Activated CD4-positive, alpha-beta memory T cell treated with anti-CD3 and anti-CD28 coated beads, Interleukin-2, amount 10 ng/mL, durations not matched to agents 7 days and 5 days (primary cell): ENCODE measurements at regions of chr15 and their contacts with region 1.

Region 1: GRCh38 chr15:75069301-75069925 is 46.0 kb downstream of the PPCDC start:
- DNase-seq: no peak
- H3K4me3 Mint-ChIP-seq: no peak overlapping the region
- H3K27ac Mint-ChIP-seq: peak overlapping the region; percentile 95
- H3K4me1 Mint-ChIP-seq: peaks cover 78% of the 10 kb centered on the region
- H3K27me3 Mint-ChIP-seq: no peaks in the 10 kb centered on the region

Region 2: DNA sequence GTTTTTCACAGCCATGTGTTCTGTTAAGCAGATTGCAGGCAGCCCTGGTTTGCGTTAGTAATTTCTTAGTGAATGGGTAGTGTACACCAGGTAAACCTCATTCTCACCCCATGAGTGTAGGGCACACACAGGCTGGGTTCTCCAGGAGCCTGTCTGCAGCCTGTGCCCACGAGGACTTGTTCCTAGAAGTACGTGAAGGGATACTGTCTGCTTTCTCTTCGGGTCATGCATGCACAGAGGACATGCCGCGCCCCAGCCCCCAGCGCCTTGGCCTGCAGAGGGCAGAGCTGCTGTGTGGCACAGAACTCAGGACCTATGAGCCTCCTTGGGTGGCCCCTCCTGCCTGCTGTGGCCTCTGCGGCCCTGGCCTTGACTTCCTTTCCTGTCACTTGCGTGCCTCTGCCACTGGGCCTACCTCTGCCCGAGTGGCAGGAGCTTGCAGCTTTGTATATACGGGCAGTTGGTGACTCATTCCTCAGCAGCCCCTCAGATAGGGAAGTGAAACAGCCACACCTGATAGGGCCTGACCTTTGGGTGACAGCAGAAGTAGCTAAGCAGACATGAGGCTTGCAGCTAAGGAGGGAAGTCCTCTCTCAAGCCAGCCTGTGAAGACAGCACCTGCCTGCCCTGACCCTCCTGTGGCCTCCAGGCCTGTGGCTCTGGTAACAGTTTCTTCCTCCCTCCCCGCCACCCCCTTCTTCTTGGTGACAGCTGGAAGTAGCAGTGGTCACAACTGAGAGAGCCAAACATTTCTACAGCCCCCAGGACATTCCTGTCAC is 26.5 kb before region 1 on chr15:
- CTCF ChIA-PET with region 1: interaction called, 34 read pairs
- POLR2A ChIA-PET with region 1: interaction called, 4 read pairs
- DNase-seq: peak; percentile 92
- H3K4me3 Mint-ChIP-seq: peak overlapping the region; percentile 74
- H3K27ac Mint-ChIP-seq: peak overlapping the region; percentile 86
- H3K4me1 Mint-ChIP-seq: peaks cover 91% of the 10 kb centered on the region
- H3K27me3 Mint-ChIP-seq: no peaks in the 10 kb centered on the region

Region 3: DNA sequence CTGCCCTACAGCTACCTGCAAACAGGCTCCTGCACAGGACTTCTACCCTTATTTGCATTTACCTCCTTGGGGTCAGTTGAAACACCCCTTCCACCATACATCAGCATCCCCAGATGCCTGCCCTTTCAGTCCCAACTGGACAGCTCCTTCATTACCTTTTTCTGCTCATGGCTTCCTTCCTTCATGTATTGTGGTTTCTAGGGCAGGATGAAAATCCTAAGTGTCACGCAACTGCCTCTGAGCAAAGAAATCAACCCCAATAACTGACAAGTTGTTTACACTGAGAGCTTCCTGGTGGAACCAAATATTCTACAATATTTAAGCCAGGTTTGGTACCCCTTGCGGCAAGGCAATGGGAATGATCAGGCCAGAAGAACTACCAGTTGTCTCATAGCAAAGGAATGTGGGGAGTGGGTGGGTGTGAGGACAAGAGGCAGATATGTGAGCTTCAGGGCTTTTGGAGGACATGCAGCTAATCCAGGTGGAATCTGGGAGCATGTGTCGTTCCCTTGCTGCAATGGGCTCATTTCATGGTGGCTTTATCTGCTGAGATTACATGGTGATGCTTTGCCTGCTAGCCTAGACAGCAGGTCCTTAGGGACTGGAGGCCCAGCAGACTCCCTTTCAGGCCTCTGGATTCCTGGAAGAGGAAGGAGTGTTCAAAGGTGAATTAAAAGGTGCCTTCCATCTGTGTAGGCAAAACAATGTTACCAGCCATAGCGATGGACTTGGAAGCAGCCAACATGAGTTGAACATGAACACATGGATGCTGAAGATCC is 11.1 kb before region 1 on chr15:
- CTCF ChIA-PET with region 1: interaction called, 4 read pairs
- POLR2A ChIA-PET with region 1: interaction called, 11 read pairs
- DNase-seq: peak; percentile 12
- H3K4me3 Mint-ChIP-seq: no peak overlapping the region
- H3K27ac Mint-ChIP-seq: peak overlapping the region; percentile 34
- H3K4me1 Mint-ChIP-seq: peaks cover 53% of the 10 kb centered on the region
- H3K27me3 Mint-ChIP-seq: no peaks in the 10 kb centered on the region

Region 4: DNA sequence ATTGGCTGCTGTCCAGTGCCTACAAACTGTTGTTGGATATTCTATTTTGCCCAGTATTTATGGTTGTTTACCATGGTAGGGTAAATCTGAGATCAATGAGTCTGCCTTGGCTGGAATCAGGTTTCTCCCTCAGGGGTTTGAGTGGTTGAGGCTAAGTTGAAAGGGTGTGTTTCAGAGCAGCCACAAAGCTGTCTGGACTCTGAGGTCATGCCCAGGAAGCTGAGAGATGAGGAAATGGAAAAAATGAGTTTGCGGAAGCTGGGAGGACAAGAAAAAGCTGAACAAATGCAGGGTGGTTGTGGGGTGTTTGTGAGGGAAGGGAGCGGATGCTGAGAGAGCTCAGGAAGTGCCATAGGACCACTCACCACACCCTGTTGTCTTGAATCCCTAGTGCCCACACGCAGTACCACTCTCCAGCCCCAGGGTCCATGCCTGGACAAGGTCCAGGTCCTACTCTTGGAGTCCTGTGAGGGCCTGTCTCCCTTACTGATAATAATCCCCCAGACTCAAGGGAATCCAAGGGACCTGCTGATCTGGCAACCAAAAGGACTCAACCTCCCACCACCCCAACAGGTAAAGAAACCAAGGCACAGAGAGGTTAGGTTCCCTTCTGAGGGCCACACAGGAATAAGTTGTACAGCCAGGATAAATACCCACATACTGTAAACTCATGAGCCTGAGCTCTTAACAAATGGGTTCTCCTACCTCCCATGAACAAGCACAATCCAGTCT is 35.6 kb after region 1 on chr15:
- CTCF ChIA-PET with region 1: interaction called, 14 read pairs
- POLR2A ChIA-PET with region 1: interaction called, 41 read pairs
- DNase-seq: peak; percentile 64
- H3K4me3 Mint-ChIP-seq: peak overlapping the region; percentile 5
- H3K27ac Mint-ChIP-seq: peak overlapping the region; percentile 75
- H3K4me1 Mint-ChIP-seq: peaks cover 42% of the 10 kb centered on the region
- H3K27me3 Mint-ChIP-seq: peaks cover 13% of the 10 kb centered on the region

Region 5: DNA sequence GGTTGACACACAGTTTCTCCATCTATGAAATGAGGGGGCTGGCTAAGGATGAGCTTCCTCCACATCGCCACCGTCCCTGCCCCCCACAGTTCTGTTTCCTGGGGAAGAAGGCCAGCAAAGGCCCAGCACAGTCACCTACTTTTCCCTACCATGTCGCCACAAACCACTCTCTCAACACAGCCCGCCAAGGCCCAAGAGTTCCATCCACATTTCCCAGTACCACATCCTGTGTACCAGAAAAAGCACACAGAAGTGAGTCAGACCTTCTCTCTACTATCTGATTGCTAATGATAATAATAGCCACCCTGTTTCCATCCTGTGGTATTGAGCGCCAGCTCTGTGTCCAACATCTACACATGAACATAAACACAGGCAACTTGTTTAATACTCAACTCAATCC is 102.0 kb after region 1 on chr15:
- CTCF ChIA-PET with region 1: interaction called, 3 read pairs
- POLR2A ChIA-PET with region 1: interaction called, 16 read pairs
- DNase-seq: peak; percentile 73
- H3K4me3 Mint-ChIP-seq: no peak overlapping the region
- H3K27ac Mint-ChIP-seq: peak overlapping the region; percentile 61
- H3K4me1 Mint-ChIP-seq: peaks cover 59% of the 10 kb centered on the region
- H3K27me3 Mint-ChIP-seq: peaks cover 9% of the 10 kb centered on the region